H1 (cell line): ENCODE measurements at regions of chr20 and their contacts with region 1.

Region 1: DNA sequence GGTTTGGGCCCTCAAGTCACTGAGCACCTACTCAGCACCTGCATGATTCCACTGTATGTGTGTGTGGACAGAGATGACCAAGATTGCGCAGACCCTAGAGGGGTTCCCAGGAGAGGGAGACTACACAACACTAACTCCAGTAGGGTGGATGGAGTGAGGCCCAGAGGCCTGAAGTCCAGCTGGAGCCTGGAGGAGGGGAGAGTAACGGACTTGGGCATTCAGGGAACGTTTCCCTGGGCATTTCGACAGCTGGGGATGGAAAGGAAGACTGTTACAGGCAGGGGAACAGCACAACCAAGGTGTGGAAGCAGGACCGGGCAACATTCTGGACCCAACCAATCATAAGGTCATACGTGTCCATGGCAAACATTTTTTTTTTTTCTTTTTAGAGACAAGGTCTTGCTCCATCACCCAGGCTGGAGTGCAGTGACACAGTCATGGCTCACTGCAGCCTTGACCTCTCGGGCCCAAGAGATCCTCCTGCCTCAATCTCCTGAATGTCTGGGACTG is 11.1 kb upstream of the CEBPB start:
- DNase-seq: no peak
- H3K4me3 ChIP-seq: no peak overlapping the region
- H3K27ac ChIP-seq: no peak overlapping the region
- H3K4me1 ChIP-seq: peaks cover 0 to 3% (median 0%) of the 10 kb centered on the region in 4 experiments; a peak in 2 of 7 replicates
- H3K27me3 ChIP-seq: no peaks in the 10 kb centered on the region
- CTCF ChIP-seq: no peak
- EP300 ChIP-seq: no peak
- POLR2A ChIP-seq: no peak
- RAD21 ChIP-seq: no peak

Region 2: DNA sequence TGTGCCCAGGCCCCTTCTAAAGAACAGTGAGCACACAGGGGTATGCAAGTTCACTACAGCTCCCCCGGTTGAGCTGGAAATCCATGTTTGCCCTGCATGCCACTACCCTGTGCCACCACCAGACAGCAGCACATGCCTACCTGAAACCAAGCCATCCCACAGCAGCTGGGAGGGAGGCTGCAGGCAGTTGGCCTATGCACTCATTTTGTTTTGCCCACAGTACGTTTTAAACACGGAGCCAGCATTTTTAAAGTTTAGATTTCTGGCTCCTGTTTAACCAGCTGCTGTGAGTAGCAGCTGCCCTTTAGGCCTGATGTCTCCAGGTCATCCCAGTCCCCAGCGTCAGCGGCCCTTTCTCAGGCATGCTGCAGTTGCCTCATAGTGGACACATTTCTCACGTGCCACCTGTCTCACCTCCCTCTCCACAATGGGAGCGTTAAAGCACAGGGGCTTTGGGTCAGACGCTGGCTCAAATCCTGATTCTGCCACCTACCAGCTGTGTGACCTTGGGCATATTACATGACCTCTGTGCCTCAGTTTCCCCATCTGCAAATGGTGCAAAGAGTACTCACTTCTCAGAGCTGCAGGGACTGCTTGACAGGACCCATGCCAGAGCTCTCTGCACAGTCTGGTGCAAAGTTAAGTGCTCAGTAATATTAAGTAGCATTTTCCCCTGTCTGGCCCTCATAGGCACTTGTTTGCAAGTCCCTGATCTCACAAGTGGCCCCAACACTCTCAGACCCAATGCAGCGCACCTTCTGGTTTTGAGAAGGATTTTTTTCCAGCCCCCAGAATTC is 58.5 kb before region 1 on chr20:
- CTCF ChIA-PET with region 1: interaction called, 160 read pairs
- POLR2A ChIA-PET with region 1: interaction called, 12 read pairs
- DNase-seq: peak; percentile 56 to 66
- H3K4me3 ChIP-seq: no peak overlapping the region
- H3K27ac ChIP-seq: no peak overlapping the region
- H3K4me1 ChIP-seq: peaks cover 0 to 5% (median 1%) of the 10 kb centered on the region in 4 experiments; a peak in 3 of 7 replicates
- H3K27me3 ChIP-seq: no peaks in the 10 kb centered on the region
- CTCF ChIP-seq: peak; percentile 96 to 100 (median 97)
- EP300 ChIP-seq: no peak
- POLR2A ChIP-seq: no peak
- RAD21 ChIP-seq: peak; percentile 95 to 98

Region 3: DNA sequence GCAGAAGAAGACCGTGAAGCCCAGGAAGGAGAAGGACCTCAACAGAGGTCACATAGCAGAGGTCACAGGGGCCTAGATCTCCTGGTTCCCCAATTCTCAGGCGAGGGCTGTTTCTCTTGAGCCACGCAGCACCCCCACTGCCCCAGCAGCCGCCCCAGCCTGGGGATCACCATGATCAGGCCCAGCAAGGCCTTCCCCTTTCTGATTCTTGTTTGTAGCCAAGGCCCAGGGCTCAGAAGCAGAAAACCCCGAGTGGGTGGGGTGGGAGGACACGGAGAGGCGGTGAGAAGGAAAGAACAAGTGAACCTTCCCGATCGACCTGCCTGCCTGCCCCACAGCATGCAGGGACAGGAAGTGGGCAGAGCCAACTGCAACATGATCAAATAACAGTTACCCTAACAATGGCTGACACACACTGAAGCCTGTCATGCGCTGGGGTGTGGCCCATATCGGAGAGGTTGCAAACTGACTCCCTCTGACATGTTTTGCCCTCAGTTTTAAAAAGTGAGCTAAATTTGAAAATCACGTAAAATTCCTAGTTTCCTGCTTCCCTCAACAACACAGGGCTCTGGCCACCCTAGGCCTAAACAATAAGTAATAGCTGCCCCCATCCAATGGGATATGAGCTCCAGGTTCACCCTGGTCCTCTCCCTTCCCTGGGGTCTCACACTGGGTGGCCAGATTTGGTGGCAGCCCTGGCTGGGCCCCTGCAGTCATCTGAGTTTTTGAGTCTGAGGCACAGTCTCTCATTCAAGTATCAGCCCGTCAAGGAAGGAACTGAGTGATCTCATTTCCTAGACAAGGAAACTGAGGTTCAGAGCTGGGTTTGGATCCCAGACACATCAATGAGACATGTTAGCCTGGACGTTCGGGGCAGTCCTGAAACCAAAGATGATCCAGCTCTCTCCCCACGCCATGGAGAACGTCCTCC is 32.6 kb before region 1 on chr20:
- CTCF ChIA-PET with region 1: interaction called, 40 read pairs
- POLR2A ChIA-PET with region 1: interaction called, 3 read pairs
- DNase-seq: no peak
- H3K4me3 ChIP-seq: no peak overlapping the region
- H3K27ac ChIP-seq: peak overlapping the region; percentile 56
- H3K4me1 ChIP-seq: peaks cover 14 to 26% (median 19%) of the 10 kb centered on the region in 4 experiments
- H3K27me3 ChIP-seq: no peaks in the 10 kb centered on the region
- CTCF ChIP-seq: no peak
- EP300 ChIP-seq: no peak
- POLR2A ChIP-seq: no peak
- RAD21 ChIP-seq: no peak

Region 4: DNA sequence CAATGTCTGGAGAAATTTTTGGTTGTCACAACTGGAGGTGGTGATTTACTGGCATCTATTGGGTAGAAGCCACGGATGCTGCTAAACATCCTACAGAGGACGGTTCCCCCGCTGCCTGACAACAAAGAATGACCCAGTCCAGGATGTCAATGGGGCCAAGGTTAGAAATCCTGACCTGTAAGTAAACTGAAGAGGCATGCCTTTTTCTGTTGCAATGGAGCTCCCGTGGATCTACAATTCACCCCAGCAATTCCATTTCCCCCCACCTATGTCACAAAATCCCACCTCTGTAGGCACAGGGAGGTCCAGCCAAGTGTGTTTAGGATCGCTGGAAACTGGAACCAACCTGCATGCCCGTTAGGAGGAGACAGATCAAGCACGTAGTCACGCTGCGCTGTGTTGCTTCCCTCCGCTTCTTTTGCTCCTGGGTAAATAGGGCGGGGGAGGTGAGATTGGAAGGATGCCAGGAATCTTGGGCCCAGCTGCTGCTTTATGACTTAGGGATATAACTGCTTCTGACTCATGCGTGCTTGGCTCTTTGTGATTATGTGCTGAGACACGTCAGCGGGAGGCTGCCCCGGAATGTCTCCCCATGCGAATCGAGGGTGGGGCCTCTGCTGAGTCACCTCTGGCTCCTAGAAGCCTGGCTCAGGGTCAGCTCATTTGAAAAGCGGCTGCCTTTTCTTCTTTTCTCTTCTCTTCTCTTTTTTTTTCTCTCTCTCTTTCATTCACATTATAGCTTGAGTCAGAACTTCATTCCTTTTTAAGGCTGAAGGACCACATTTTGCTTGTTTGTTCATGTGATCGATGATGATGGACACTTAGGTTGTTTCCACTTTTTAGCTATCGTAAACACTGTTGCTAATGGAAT is 13.6 kb before region 1 on chr20:
- CTCF ChIA-PET with region 1: interaction called, 13 read pairs
- POLR2A ChIA-PET with region 1: interaction called, 3 read pairs
- DNase-seq: peak; percentile 71 to 91
- H3K4me3 ChIP-seq: peak overlapping the region in 3 of 4 experiments; percentile 27 to 51 (median 48); a peak in 7 of 8 replicates
- H3K27ac ChIP-seq: peak overlapping the region; percentile 84
- H3K4me1 ChIP-seq: peaks cover 4 to 8% (median 5%) of the 10 kb centered on the region in 4 experiments; a peak in 5 of 7 replicates
- H3K27me3 ChIP-seq: no peaks in the 10 kb centered on the region
- CTCF ChIP-seq: no peak
- EP300 ChIP-seq: peak in 1 of 2 experiments; percentile 83; a peak in 1 of 3 replicates
- POLR2A ChIP-seq: peak in 1 of 2 experiments; percentile 87; a peak in 2 of 3 replicates
- RAD21 ChIP-seq: no peak

Region 5: DNA sequence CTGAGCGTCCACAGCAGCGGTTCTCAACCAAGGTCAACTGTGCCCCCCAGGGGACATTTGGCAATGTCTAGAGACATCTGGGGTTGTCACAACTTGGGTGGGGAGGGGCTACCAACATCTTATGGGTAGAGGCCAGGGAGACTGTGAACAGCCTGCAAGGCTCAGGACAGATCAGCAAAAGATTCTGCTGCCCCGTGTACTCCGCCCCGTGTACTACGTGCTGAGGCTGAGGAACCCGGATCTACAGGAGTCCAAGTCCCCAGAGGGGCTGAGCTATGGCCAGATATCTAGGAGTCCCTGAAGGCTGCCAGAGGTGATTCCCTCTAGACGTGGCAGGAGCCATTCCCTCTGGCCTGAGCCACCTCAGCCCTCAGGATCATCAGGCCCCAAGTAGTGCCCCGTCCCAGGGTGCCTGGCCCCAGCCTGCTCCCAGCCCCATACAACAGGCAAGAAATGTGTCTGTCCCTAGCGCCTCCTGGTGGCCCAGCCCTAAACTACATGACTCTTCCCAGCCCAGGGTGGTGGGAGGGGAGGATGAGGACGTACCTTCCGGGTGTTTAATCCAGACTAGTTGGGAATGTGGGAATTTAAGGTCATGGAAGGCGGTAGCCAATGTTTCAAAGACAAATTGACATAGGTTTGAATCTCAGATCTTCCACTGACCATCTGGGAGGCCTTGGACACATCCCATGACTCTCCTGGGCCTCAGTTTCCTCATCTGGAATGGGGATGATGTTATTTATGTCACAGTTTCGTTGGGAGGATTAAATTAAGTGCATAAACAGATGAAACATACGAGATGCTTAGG is 281.1 kb after region 1 on chr20:
- CTCF ChIA-PET with region 1: interaction called, 115 read pairs
- POLR2A ChIA-PET with region 1: no interaction called
- DNase-seq: peak in 1 of 2 experiments; percentile 99
- H3K4me3 ChIP-seq: no peak overlapping the region
- H3K27ac ChIP-seq: no peak overlapping the region
- H3K4me1 ChIP-seq: peaks cover 0 to 8% (median 2%) of the 10 kb centered on the region in 4 experiments; a peak in 5 of 7 replicates
- H3K27me3 ChIP-seq: no peaks in the 10 kb centered on the region
- CTCF ChIP-seq: peak; percentile 92 to 95 (median 93)
- EP300 ChIP-seq: no peak
- POLR2A ChIP-seq: no peak
- RAD21 ChIP-seq: peak; percentile 91